ENCODE measurements at regions of chr15 and their contacts with region 1.

Region 1: GRCh38 chr15:59492389-59493377 is 54.7 kb downstream of the FAM81A start:
- DNase-seq: peak; percentile 57
- CTCF ChIP-seq: peak; percentile 85

Region 2: DNA sequence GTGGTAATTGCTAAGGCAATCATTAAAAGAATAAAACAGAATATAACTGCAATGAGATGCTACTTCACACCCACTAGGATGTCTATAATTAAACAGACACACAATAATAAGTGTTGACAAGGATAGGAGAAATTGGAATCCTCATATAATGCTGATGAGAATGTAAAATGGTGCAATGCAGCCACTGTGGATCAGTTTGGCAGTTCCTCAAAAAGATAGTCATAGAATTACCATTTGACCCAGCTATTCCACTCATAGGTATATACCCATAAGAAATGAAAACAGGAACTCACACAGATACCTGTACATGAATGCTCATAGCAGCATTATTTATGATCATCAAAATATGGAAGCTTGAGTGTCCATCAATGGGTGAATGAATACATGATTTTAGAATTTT is 514.8 kb before region 1 on chr15:
- in situ Hi-C with region 1: loop called (anchors 10 kb)
- DNase-seq: no peak
- CTCF ChIP-seq: no peak

Region 3: GRCh38 chr15:59174835-59175831 is 317.6 kb before region 1 on chr15:
- in situ Hi-C with region 1: loop called (anchors 25 kb)
- DNase-seq: peak; percentile 58
- CTCF ChIP-seq: peak; percentile 30